ENCODE measurements at regions of chr18 and their contacts with region 1.

Region 1: GRCh38 chr18:50429207-50429948 is 54.5 kb downstream of the SKA1 start:
- DNase-seq: peak in 5 of 9 donors; percentile 4 to 16 (median 4)
- ATAC-seq: no peak
- H3K4me3 ChIP-seq: no peak overlapping the region
- H3K4me3 Mint-ChIP-seq: no peak overlapping the region
- H3K27ac ChIP-seq: no peak overlapping the region
- H3K27ac Mint-ChIP-seq: no peak overlapping the region
- H3K4me1 ChIP-seq: no peaks in the 10 kb centered on the region
- H3K4me1 Mint-ChIP-seq: no peaks in the 10 kb centered on the region
- H3K27me3 ChIP-seq: no peaks in the 10 kb centered on the region
- H3K27me3 Mint-ChIP-seq: peaks cover 8 to 19% (median 13%) of the 10 kb centered on the region in 5 donors

Region 2: DNA sequence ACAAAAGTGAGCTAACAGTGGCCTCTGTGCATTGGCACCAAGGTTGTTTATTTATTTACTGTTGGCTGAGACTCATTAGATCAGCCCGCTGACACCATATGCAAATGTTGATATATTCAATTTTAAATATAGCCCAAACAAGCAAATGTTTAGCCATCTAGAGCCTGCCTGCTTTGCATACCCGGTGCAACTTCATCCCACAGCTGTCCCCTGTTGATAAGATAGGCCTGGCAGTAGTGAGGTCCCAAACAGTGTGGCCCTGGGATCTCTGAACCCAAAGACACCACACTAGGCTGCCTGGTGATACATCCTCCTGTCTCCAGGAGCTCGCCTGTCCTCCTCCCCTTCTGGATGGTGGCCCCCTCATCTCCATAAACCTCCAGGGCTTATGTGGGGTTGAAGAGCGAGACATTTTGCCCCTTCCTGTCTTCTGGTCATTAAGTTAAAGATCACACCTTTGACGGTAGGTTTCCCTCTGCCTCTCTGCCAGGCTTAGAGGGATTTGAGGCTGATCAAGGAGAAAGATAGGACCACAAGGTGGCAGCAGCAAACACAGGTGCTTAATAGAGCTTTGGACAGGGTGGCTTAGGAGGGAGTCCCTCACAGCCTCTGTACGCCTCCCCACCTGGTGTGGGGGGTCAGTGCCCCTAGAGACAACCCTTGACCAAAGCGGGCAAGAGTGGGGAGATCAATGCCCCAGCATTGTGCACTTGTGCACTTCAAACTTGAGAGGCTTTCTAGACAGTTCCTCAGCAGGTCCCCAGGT is 210.8 kb before region 1 on chr18:
- CTCF ChIA-PET with region 1: no interaction called
- POLR2A ChIA-PET with region 1: no interaction called
- intact Hi-C with region 1: loop called in 1 of 2 experiments (anchors 5 kb)
- DNase-seq: peak in 4 of 9 donors; percentile 19 to 37 (median 28)
- ATAC-seq: peak; percentile 54
- H3K4me3 ChIP-seq: no peak overlapping the region
- H3K4me3 Mint-ChIP-seq: no peak overlapping the region
- H3K27ac ChIP-seq: no peak overlapping the region
- H3K27ac Mint-ChIP-seq: no peak overlapping the region
- H3K4me1 ChIP-seq: no peaks in the 10 kb centered on the region
- H3K4me1 Mint-ChIP-seq: no peaks in the 10 kb centered on the region
- H3K27me3 ChIP-seq: no peaks in the 10 kb centered on the region
- H3K27me3 Mint-ChIP-seq: peaks cover 21 to 47% (median 29%) of the 10 kb centered on the region in 5 donors